ENCODE measurements at regions of chr20 and their contacts with region 1.

Region 1: GRCh38 chr20:36439040-36439730 is 102.1 kb upstream of the MYL9 start:
- DNase-seq: no peak
- H3K4me3 ChIP-seq: no peak overlapping the region
- CTCF ChIP-seq: peak; percentile 89

Region 2: GRCh38 chr20:36153736-36154699 is 285.2 kb before region 1 on chr20:
- CTCF ChIA-PET with region 1: interaction called, 38 read pairs
- POLR2A ChIA-PET with region 1: no interaction called
- DNase-seq: no peak
- H3K4me3 ChIP-seq: peak overlapping the region; percentile 78
- CTCF ChIP-seq: no peak

Region 3: DNA sequence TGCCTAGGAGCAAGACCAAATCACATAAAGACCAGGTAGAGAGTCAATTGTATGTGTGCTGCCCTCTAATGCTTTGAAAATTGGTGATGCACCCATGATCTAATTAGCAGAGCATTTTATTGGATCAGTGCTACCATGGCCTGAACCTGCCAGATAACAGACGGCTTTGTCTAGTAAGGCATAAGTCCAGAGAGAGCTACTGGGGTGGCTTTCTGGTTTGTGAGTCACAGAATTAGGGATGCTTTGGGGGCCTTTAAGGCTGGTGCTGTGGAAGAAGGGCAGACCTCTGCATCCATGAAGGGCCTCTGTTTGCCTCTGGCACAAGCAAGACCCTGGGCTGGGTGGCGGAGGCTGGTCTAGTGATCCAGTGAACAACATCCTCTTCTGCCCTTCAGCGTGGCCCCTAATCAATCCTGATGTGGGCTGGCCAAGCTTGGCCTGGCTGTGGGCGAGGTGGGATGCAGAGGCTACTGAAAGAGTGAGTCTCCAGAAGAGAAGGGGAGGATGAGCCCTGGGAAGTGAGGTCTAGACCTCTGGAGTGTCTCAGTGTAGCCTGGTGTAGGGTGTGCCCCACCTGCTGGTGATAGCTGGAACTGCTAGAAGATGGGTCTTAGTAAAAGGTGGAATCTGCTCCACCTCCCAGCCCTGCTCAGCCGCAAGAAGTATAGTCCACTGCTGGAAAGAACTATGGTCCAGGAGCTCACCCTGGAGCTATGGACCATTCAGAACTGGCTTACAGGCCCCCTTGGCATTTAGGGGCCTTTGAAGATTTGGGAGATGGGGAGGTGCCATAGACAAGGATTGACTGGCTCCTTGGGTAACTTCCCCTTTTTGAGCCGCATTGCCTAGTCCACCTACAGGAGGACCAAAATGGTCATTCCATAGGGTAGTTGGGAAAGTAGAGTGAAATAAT is 239.6 kb before region 1 on chr20:
- CTCF ChIA-PET with region 1: interaction called, 104 read pairs
- POLR2A ChIA-PET with region 1: no interaction called
- DNase-seq: peak; percentile 9
- H3K4me3 ChIP-seq: no peak overlapping the region
- CTCF ChIP-seq: peak; percentile 87

Region 4: GRCh38 chr20:36214684-36215256 is 224.4 kb before region 1 on chr20:
- CTCF ChIA-PET with region 1: interaction called, 48 read pairs
- POLR2A ChIA-PET with region 1: no interaction called
- DNase-seq: no peak
- H3K4me3 ChIP-seq: no peak overlapping the region
- CTCF ChIP-seq: peak; percentile 71

Region 5: GRCh38 chr20:36235892-36236785 is 203.0 kb before region 1 on chr20 and contains the start of gene AAR2:
- CTCF ChIA-PET with region 1: interaction called, 20 read pairs
- POLR2A ChIA-PET with region 1: no interaction called
- DNase-seq: peak; percentile 2
- H3K4me3 ChIP-seq: peak within 1 kb of the TSS; percentile 86
- CTCF ChIP-seq: no peak

Region 6: GRCh38 chr20:36273414-36274180 is 165.6 kb before region 1 on chr20:
- CTCF ChIA-PET with region 1: interaction called, 73 read pairs
- POLR2A ChIA-PET with region 1: no interaction called
- DNase-seq: no peak
- H3K4me3 ChIP-seq: no peak overlapping the region
- CTCF ChIP-seq: peak; percentile 10

Region 7: DNA sequence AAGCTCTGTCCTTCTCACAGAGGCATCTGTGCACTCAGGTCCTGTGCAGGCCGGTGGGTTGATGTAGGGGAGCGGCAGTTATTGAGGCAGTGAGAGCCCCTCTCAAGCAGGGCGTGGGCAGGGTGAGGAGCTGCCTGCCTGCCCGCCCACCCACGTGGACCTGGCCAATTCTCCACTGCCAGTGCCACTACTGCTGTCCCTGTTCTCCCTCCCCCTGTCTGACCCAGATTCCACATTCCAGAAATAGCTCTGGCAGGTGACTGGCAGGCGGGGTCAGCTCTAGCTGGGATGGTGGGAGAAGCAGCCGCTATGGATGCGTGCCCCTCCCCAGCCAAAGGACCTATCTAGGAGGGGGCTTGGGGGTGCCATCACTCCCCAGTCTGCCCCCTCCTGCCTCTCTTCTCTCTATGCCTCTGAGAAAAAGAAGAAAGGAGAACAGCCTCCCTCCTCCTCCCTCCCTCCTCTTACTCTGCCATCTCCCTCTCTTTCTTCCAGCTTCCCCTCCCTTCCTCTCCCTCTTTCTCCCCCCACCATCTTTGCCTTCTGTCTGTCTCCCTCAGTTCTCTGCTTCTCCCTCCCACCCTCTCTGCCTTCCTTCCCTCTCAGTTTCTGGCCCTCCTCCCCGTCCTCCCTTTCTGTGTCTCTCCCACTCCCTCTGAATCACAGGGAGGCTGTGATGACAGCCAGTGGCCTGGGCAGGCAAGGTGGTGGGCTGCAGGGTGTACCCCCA is 15.7 kb after region 1 on chr20:
- CTCF ChIA-PET with region 1: interaction called, 84 read pairs
- POLR2A ChIA-PET with region 1: no interaction called
- DNase-seq: no peak
- H3K4me3 ChIP-seq: no peak overlapping the region
- CTCF ChIP-seq: no peak